MCF 10A (cell line): ENCODE measurements at regions of chr14 and their contacts with region 1.

Region 1: GRCh38 chr14:23910101-23910875 is 43.3 kb upstream of the DHRS4 start:
- DNase-seq: peak; percentile 75
- H3K4me3 Mint-ChIP-seq: no peak overlapping the region
- H3K27ac Mint-ChIP-seq: no peak overlapping the region
- H3K4me1 Mint-ChIP-seq: no peaks in the 10 kb centered on the region
- H3K27me3 Mint-ChIP-seq: peaks cover 19% of the 10 kb centered on the region
- CTCF ChIP-seq: peak; percentile 93

Region 2: DNA sequence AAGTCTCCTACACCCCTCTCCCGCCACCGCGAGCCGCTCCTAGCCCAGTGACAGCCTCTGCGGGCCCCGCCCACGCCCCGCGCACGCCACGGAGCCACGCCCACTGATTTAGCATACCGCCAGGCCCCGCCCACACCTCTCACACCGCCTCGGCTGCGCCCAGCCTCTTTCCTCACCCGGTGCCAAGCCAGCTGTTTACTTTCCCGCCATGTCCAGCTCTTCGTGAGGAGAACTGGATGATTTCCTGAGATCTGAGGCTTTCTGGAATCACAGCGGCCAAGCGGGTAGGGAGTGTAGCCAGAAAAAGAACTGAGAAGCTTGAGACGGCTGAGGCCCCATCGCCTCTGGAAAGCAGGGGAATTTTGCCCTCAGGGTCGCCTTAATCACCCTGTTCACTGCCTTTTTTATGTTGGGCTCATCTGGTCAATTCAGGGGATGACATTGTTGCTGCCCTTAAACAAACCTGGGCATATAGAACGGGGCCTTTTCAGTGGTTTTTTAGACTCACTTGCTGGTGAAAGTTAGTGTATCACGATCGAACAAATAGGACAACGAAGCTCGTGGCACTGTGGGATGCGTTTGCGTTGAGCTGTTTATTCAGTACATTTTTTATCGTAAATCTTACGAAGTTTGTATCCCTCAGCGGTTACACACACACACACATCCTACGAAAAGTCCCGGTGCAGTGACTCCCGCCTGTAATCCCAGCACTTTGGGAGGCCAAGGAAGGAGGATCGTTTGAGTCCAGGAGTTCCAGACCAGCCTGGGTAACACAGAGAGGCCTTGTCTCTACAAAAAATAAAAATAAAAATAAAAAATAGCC is 672.3 kb before region 1 on chr14 and contains the start of gene RNF212B:
- CTCF ChIA-PET with region 1: no interaction called
- POLR2A ChIA-PET with region 1: no interaction called
- intact Hi-C with region 1: no loop called
- DNase-seq: peak; percentile 86
- H3K4me3 Mint-ChIP-seq: peak within 1 kb of the TSS; percentile 74
- H3K27ac Mint-ChIP-seq: peak within 1 kb of the TSS; percentile 63
- H3K4me1 Mint-ChIP-seq: peaks cover 7% of the 10 kb centered on the region
- H3K27me3 Mint-ChIP-seq: no peaks in the 10 kb centered on the region
- CTCF ChIP-seq: no peak
- total RNA-seq, gene RNF212B: not detected in 2 replicates

Region 3: DNA sequence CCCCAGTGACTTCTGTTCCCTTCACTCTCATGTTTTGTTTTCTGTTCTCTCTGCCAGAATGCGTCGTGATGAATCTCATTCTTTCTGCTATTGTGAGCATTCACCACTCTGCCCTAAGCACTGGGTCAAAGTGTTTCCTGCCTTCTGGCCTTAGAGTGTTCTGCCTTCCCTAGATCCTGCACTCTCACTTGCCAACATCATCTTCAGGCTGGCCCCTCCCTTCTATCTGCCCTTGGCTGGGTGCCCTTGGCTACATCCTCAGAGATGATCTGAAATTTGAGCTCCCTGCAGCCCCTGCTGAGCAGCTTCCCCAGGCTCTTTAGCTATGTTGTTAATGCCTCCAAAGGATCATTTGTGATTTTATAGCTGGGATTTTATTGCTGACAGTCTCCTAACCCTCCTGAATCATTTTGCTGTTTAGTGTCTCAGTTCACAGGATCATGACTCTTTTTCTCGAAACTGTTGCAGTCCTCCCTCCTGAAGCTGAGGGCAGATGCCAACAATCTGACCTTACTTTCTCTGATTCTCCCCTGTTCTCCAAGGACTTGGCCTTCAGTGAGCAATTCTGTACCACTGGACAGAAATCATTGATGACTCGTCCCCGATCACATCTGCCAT is 269.7 kb before region 1 on chr14:
- CTCF ChIA-PET with region 1: interaction called, 27 read pairs
- POLR2A ChIA-PET with region 1: interaction called, 4 read pairs
- intact Hi-C with region 1: no loop called
- DNase-seq: peak; percentile 55
- H3K4me3 Mint-ChIP-seq: no peak overlapping the region
- H3K27ac Mint-ChIP-seq: no peak overlapping the region
- H3K4me1 Mint-ChIP-seq: no peaks in the 10 kb centered on the region
- H3K27me3 Mint-ChIP-seq: no peaks in the 10 kb centered on the region
- CTCF ChIP-seq: no peak

Region 4: DNA sequence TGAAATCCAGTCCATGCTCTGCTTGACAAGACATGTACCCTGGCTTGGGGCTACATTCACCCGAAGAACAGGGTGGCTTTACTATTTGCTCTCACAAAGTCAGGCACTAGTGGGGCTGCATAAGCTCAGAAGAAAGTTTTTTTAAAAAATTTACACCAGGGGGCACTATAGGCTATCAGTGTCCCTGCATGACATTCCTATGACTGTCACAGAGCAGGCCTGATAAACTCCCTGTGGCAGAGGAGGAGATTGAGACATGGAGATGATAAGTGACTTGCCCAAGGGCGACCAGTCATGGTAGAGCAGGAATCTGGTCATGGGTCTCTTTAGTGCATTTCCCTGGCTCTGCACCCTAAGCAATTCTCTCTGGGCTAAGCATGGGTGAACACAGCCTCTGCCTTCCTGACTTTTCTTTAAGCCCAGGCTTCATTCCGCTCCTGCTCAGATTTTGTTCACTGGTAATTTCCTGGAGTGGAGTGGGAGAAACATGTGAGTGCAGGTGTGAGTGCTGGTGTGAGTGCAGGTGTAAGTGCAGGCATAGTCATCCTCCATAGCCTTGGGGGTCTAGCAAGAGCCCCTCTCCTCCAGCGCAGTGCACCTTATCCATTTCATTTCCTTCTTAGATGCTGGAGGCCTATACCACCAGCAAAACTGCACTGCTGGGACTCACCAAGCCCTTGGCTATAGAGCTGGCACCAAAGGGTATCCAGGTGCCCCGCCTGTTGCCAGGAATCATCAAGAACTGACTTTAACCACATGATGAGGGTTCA is 182.5 kb before region 1 on chr14:
- CTCF ChIA-PET with region 1: interaction called, 105 read pairs
- POLR2A ChIA-PET with region 1: interaction called, 5 read pairs
- intact Hi-C with region 1: loop called (anchors 1 kb)
- DNase-seq: peak; percentile 51
- H3K4me3 Mint-ChIP-seq: no peak overlapping the region
- H3K27ac Mint-ChIP-seq: no peak overlapping the region
- H3K4me1 Mint-ChIP-seq: peaks cover 7% of the 10 kb centered on the region
- H3K27me3 Mint-ChIP-seq: no peaks in the 10 kb centered on the region
- CTCF ChIP-seq: peak; percentile 49

Region 5: GRCh38 chr14:23787436-23787835 is 122.9 kb before region 1 on chr14:
- CTCF ChIA-PET with region 1: no interaction called
- POLR2A ChIA-PET with region 1: no interaction called
- intact Hi-C with region 1: no loop called
- DNase-seq: no peak
- H3K4me3 Mint-ChIP-seq: no peak overlapping the region
- H3K27ac Mint-ChIP-seq: no peak overlapping the region
- H3K4me1 Mint-ChIP-seq: no peaks in the 10 kb centered on the region
- H3K27me3 Mint-ChIP-seq: peaks cover 71% of the 10 kb centered on the region
- CTCF ChIP-seq: no peak

Region 6: DNA sequence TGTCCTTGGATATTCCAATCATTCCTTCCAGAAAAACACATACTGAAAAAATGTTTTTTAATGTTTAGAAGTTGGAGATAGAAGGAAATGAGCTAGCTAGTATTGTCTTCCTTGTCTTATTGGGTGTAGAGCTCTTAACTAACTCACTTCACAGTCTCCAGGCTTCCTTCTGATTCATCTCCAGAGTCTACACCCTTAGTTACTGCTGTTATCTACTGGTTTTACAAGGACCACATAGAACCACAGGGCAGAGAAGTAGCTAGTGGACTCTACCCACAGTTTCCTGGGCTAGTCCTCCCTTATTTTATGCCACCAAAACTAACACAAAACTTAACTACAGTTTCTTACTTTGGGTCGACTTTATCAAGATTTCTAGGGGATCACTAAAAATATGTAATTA is 12.3 kb after region 1 on chr14:
- CTCF ChIA-PET with region 1: interaction called, 19 read pairs
- POLR2A ChIA-PET with region 1: no interaction called
- intact Hi-C with region 1: no loop called
- DNase-seq: no peak
- H3K4me3 Mint-ChIP-seq: no peak overlapping the region
- H3K27ac Mint-ChIP-seq: no peak overlapping the region
- H3K4me1 Mint-ChIP-seq: no peaks in the 10 kb centered on the region
- H3K27me3 Mint-ChIP-seq: no peaks in the 10 kb centered on the region
- CTCF ChIP-seq: no peak